K562 (cell line): ENCODE measurements at regions of chr14 and their contacts with region 1.

Region 1: DNA sequence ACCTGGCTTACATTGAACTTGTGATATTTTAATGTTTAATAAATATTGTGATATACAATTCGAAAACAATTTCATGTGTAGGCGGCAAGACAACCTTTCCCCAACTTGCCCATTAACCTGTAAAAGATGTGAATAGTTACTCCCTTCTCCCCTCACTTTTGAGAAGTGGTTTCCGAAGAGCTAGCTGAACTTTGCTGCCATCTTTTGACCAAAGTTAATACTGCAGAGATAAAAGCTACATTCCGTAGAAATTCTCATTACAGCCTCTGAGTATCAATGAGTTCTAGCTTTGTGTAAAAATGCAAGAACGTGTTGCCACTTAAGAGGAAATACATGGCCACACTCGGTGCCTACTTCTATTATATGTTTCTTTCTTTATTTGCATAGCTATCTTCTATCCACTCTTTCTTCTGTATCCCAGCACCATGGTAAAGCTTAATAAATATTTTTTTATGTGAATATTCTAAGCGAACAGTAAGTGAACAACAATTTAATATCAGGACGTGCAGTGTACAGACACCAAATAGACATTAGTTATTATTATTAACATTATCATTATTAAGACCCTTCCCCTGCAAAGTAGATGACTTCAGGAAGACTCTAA is 105.1 kb upstream of the TMEM260 start:
- DNase-seq: peak; percentile 5 to 30 (median 16)
- ATAC-seq: no peak
- H3K4me3 ChIP-seq: no peak overlapping the region
- H3K27ac ChIP-seq: no peak overlapping the region
- H3K4me1 ChIP-seq: no peaks in the 10 kb centered on the region
- H3K27me3 ChIP-seq: no peaks in the 10 kb centered on the region
- CTCF ChIP-seq: peak; percentile 56 to 77 (median 63); a peak in 5 of 6 replicates
- EP300 ChIP-seq: no peak
- POLR2A ChIP-seq: no peak
- RAD21 ChIP-seq: peak; percentile 74 to 84

Region 2: GRCh38 chr14:55438066-55438683 is 1036.3 kb before region 1 on chr14:
- CTCF ChIA-PET with region 1: interaction called, 3 read pairs
- POLR2A ChIA-PET with region 1: no interaction called
- in situ Hi-C with region 1: loop called (anchors 10 kb)
- intact Hi-C with region 1: loop called (anchors 5 kb)
- DNase-seq: peak; percentile 27 to 55 (median 33)
- ATAC-seq: peak; percentile 90
- H3K4me3 ChIP-seq: no peak overlapping the region
- H3K27ac ChIP-seq: no peak overlapping the region
- H3K4me1 ChIP-seq: peaks cover 0 to 4% of the 10 kb centered on the region in 2 experiments; a peak in 2 of 5 replicates
- H3K27me3 ChIP-seq: peaks cover 0 to 4% of the 10 kb centered on the region in 2 experiments; a peak in 1 of 5 replicates
- CTCF ChIP-seq: peak; percentile 29 to 65 (median 56); a peak in 5 of 6 replicates
- EP300 ChIP-seq: no peak
- POLR2A ChIP-seq: no peak
- RAD21 ChIP-seq: peak; percentile 47 to 68

Region 3: DNA sequence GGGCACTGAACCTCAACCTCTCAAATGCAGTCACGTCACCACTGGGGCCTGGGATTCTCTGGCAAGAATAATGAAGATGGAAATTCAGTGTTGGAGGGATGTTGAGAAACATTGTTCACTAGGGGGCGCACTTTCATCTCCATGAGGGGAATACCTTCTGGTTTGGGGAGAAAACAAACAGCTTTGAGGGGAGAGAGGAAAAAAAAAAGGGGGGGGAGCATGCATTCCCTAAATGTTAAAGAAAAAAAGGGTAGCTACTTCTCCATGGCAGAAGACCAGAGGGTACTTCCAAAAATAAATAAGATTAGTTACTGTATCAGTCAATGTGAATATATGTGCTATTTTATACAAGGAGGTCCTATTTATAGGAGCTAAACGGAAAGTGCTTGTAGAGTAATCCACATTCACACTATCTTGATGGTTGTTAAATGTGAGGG is 1028.3 kb before region 1 on chr14:
- CTCF ChIA-PET with region 1: interaction called, 7 read pairs
- POLR2A ChIA-PET with region 1: no interaction called
- in situ Hi-C with region 1: loop called (anchors 10 kb)
- intact Hi-C with region 1: no loop called
- DNase-seq: peak; percentile 48 to 81 (median 54)
- ATAC-seq: peak; percentile 91
- H3K4me3 ChIP-seq: no peak overlapping the region
- H3K27ac ChIP-seq: no peak overlapping the region
- H3K4me1 ChIP-seq: no peaks in the 10 kb centered on the region; a peak in 1 of 5 replicates
- H3K27me3 ChIP-seq: no peaks in the 10 kb centered on the region
- CTCF ChIP-seq: peak; percentile 61 to 69 (median 67)
- EP300 ChIP-seq: no peak
- POLR2A ChIP-seq: no peak
- RAD21 ChIP-seq: peak; percentile 57 to 70

Region 4: DNA sequence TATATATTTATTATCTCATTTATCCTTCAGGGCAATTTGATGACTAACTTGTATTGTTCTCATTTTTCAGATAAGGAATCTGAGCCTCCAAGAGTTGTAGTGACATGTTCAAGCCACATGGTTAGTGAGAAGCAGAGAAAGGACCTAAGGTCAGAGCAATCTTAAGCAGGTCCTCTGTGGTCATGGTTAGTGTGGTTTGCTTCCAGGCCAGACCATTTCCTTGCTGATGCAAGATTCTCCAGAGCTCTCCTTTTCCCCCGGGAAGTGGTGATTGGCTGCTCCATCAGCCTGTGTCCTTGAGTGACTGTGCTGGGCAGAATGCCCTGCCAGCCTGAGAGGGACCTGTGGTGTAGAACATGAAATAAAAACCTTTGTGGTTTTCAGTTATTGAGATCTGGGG is 753.2 kb before region 1 on chr14:
- CTCF ChIA-PET with region 1: no interaction called
- POLR2A ChIA-PET with region 1: no interaction called
- in situ Hi-C with region 1: no loop called
- intact Hi-C with region 1: loop called (anchors 10 kb)
- DNase-seq: no peak
- ATAC-seq: no peak
- H3K4me3 ChIP-seq: no peak overlapping the region
- H3K27ac ChIP-seq: no peak overlapping the region
- H3K4me1 ChIP-seq: no peaks in the 10 kb centered on the region
- H3K27me3 ChIP-seq: peaks cover 0 to 7% of the 10 kb centered on the region in 2 experiments; a peak in 2 of 5 replicates
- CTCF ChIP-seq: no peak
- EP300 ChIP-seq: no peak
- POLR2A ChIP-seq: no peak
- RAD21 ChIP-seq: no peak

Region 5: GRCh38 chr14:55864890-55865655 is 609.4 kb before region 1 on chr14:
- CTCF ChIA-PET with region 1: interaction called, 4 read pairs
- POLR2A ChIA-PET with region 1: no interaction called
- in situ Hi-C with region 1: no loop called
- intact Hi-C with region 1: loop called (anchors 5 kb)
- DNase-seq: peak; percentile 23 to 39 (median 28)
- ATAC-seq: peak; percentile 88
- H3K4me3 ChIP-seq: no peak overlapping the region
- H3K27ac ChIP-seq: no peak overlapping the region
- H3K4me1 ChIP-seq: no peaks in the 10 kb centered on the region; a peak in 1 of 5 replicates
- H3K27me3 ChIP-seq: no peaks in the 10 kb centered on the region
- CTCF ChIP-seq: peak; percentile 46 to 64 (median 47); a peak in 4 of 6 replicates
- EP300 ChIP-seq: no peak
- POLR2A ChIP-seq: no peak
- RAD21 ChIP-seq: peak; percentile 58 to 76

Region 6: GRCh38 chr14:56764338-56764737 is 289.8 kb after region 1 on chr14:
- CTCF ChIA-PET with region 1: no interaction called
- POLR2A ChIA-PET with region 1: no interaction called
- in situ Hi-C with region 1: no loop called
- intact Hi-C with region 1: no loop called
- DNase-seq: no peak
- ATAC-seq: no peak
- H3K4me3 ChIP-seq: no peak overlapping the region
- H3K27ac ChIP-seq: no peak overlapping the region
- H3K4me1 ChIP-seq: no peaks in the 10 kb centered on the region
- H3K27me3 ChIP-seq: no peaks in the 10 kb centered on the region; a peak in 1 of 5 replicates
- CTCF ChIP-seq: no peak
- EP300 ChIP-seq: no peak
- POLR2A ChIP-seq: no peak
- RAD21 ChIP-seq: no peak